CD4-positive, alpha-beta memory T cell (primary cell): ENCODE measurements at regions of chr17 and their contacts with region 1.

Region 1: GRCh38 chr17:14622615-14623101 is 321.8 kb downstream of the HS3ST3B1 start:
- DNase-seq: no peak
- H3K4me3 ChIP-seq: no peak overlapping the region
- H3K4me3 Mint-ChIP-seq: no peak overlapping the region
- H3K27ac ChIP-seq: no peak overlapping the region
- H3K27ac Mint-ChIP-seq: no peak overlapping the region
- H3K4me1 ChIP-seq: no peaks in the 10 kb centered on the region
- H3K4me1 Mint-ChIP-seq: no peaks in the 10 kb centered on the region
- H3K27me3 ChIP-seq: no peaks in the 10 kb centered on the region
- H3K27me3 Mint-ChIP-seq: peaks cover 5 to 11% of the 10 kb centered on the region in 2 donors

Region 2: GRCh38 chr17:14805348-14805747 is 182.7 kb after region 1 on chr17:
- CTCF ChIA-PET with region 1: no interaction called
- POLR2A ChIA-PET with region 1: no interaction called
- intact Hi-C with region 1: loop called (anchors 10 kb)
- DNase-seq: no peak
- H3K4me3 ChIP-seq: no peak overlapping the region
- H3K4me3 Mint-ChIP-seq: no peak overlapping the region
- H3K27ac ChIP-seq: no peak overlapping the region
- H3K27ac Mint-ChIP-seq: no peak overlapping the region
- H3K4me1 ChIP-seq: no peaks in the 10 kb centered on the region
- H3K4me1 Mint-ChIP-seq: no peaks in the 10 kb centered on the region
- H3K27me3 ChIP-seq: no peaks in the 10 kb centered on the region
- H3K27me3 Mint-ChIP-seq: peaks cover 3 to 13% of the 10 kb centered on the region in 2 donors

Region 3: GRCh38 chr17:15038656-15039055 is 416.0 kb after region 1 on chr17:
- CTCF ChIA-PET with region 1: no interaction called
- POLR2A ChIA-PET with region 1: no interaction called
- intact Hi-C with region 1: no loop called
- DNase-seq: no peak
- H3K4me3 ChIP-seq: no peak overlapping the region
- H3K4me3 Mint-ChIP-seq: no peak overlapping the region
- H3K27ac ChIP-seq: no peak overlapping the region
- H3K27ac Mint-ChIP-seq: no peak overlapping the region
- H3K4me1 ChIP-seq: no peaks in the 10 kb centered on the region
- H3K4me1 Mint-ChIP-seq: no peaks in the 10 kb centered on the region
- H3K27me3 ChIP-seq: no peaks in the 10 kb centered on the region
- H3K27me3 Mint-ChIP-seq: peaks cover 0 to 12% of the 10 kb centered on the region in 2 donors